Dendritic cell treated with granulocyte-macrophage colony-stimulating factor and Interleukin-4, amounts not matched to agents 40 ng/mL and 50 ng/mL, for 4 days (primary cell): ENCODE measurements at regions of chr5 and their contacts with region 1.

Region 1: DNA sequence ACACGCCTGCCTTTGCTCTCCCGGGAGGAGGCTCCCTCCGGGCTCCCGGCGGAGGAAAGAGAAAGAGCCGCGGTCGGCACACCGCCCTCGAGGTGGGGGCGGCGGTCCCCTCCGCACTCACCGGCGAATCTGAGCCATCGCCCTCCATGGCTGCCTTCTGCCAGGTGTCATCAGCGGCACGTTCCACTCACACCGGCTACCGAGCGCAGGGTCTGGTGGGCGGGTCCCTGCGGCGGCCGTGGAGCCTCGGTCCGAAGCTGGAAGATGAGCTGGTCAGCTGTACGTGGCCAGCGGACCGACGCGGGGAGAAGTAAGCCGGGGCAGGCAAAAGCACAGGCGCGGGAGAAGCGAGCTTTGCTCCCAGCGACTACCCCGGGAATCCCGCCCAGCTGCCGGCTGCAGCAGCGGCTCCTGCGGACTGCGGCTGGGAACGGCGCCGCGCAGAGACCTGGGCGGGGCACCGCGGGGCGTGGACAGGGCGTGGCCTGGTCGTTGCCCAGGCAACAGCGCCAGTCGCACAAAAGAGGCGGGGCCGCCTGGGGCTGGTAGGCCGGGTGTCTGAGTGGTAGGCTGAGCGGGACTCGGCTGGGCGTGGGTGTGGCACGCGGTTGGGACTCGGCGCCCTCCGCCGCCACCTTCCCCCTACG is at the start of gene TRIM36:
- H3K4me3 Mint-ChIP-seq: peak within 1 kb of the TSS; percentile 95
- H3K27ac Mint-ChIP-seq: peak within 1 kb of the TSS; percentile 96
- H3K4me1 Mint-ChIP-seq: peaks cover 51% of the 10 kb centered on the region
- H3K27me3 Mint-ChIP-seq: peaks cover 46% of the 10 kb centered on the region

Region 2: GRCh38 chr5:115098041-115098702 is 71.4 kb before region 1 on chr5:
- intact Hi-C with region 1: loop called (anchors 5 kb)
- H3K4me3 Mint-ChIP-seq: no peak overlapping the region
- H3K27ac Mint-ChIP-seq: no peak overlapping the region
- H3K4me1 Mint-ChIP-seq: no peaks in the 10 kb centered on the region
- H3K27me3 Mint-ChIP-seq: peaks cover 7% of the 10 kb centered on the region

Region 3: GRCh38 chr5:115180165-115180709 is 10.6 kb after region 1 on chr5:
- intact Hi-C with region 1: loop called (anchors 1 kb)
- H3K4me3 Mint-ChIP-seq: peak overlapping the region; percentile 89
- H3K27ac Mint-ChIP-seq: peak overlapping the region; percentile 36
- H3K4me1 Mint-ChIP-seq: peaks cover 20% of the 10 kb centered on the region
- H3K27me3 Mint-ChIP-seq: peaks cover 72% of the 10 kb centered on the region

Region 4: DNA sequence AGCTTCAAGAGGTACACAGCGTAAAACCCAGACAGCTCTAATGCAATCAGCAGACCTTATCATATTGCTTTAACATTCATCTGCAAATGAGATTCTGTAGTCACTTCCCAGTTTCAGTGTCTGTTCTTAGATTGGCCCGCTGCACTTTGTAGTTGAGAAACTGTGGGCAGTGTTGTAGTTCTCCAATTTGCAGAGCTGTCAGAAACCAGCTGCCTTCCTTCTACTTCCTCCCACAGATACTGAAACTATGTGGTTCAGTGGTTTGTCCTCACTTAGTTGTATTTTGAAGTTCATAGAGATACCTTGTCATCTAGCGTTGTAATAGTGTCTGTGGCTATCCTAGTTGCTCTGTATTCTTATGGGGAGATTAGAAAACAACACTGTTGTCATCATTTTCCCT is 39.7 kb after region 1 on chr5:
- intact Hi-C with region 1: loop called (anchors 1 kb)
- H3K4me3 Mint-ChIP-seq: peak overlapping the region; percentile 55
- H3K27ac Mint-ChIP-seq: peak overlapping the region; percentile 82
- H3K4me1 Mint-ChIP-seq: peaks cover 22% of the 10 kb centered on the region
- H3K27me3 Mint-ChIP-seq: no peaks in the 10 kb centered on the region

Region 5: GRCh38 chr5:116237912-116238500 is 1068.4 kb after region 1 on chr5:
- intact Hi-C with region 1: no loop called
- H3K4me3 Mint-ChIP-seq: no peak overlapping the region
- H3K27ac Mint-ChIP-seq: no peak overlapping the region
- H3K4me1 Mint-ChIP-seq: no peaks in the 10 kb centered on the region
- H3K27me3 Mint-ChIP-seq: no peaks in the 10 kb centered on the region